ENCODE measurements at regions of chr6 and their contacts with region 1.

Region 1: GRCh38 chr6:105553171-105553570 is 150.3 kb upstream of the PREP start:
- DNase-seq: no peak
- H3K4me3 ChIP-seq: no peak overlapping the region
- H3K27ac ChIP-seq: no peak overlapping the region
- H3K4me1 ChIP-seq: no peaks in the 10 kb centered on the region
- H3K27me3 ChIP-seq: no peaks in the 10 kb centered on the region
- CTCF ChIP-seq: no peak
- POLR2A ChIP-seq: no peak

Region 2: DNA sequence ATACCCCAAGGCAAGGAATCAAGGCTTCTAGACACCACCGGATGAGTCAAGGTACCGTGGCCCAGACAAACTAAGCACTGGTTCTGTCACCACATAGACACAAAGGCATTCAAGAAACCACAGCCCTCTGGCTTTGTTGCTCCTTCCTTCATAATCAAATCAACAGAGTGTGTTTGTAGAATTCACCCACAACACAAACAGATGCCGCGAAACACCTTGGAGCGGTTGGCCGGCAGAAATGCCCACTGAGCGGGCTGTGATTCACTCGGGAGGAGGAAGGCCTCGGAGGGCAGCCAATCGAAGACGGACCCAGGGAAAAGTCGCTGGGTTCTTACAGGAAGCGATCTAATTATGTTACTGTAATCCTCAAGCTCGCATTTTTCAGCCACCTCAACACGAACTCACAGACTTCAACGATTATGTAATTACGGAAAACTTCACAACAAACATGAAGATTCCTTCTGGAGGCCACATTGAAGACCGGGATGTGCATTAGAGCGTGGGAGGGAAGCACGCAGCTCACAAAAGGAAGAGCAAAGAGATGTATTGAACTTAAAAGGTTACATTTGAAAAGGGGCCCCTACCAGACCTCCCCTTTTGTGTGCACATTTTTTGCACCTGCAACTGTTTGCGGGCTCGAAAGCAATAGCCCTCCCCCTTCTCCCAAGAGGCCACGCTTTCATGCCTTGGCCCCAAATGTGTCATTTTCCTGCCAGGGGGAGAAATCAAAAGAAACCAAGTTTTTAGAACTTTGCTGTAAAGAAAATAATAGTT is 34.4 kb after region 1 on chr6:
- intact Hi-C with region 1: loop called (anchors 2 kb)
- DNase-seq: no peak
- H3K4me3 ChIP-seq: no peak overlapping the region
- H3K27ac ChIP-seq: no peak overlapping the region
- H3K4me1 ChIP-seq: no peaks in the 10 kb centered on the region
- H3K27me3 ChIP-seq: no peaks in the 10 kb centered on the region
- CTCF ChIP-seq: no peak
- POLR2A ChIP-seq: no peak

Region 3: DNA sequence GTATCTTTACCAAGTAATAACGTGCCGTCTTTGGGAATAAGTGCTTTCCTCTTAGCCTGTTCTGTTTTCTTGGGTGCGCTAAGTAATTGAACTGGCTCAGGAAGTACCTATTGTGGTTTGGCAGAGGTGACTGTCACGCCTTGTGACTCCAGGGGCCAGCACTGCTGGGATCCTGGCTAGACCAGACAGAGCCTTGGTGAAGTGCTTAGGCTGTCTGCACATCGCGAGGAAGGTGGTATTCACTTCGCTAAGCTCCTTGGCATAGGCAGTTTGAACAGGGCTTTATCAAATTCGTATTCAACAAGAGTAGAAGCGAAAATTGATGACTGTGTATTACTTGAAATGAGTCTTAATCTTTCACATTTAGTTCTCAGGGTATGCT is 550.5 kb after region 1 on chr6:
- intact Hi-C with region 1: loop called (anchors 5 kb)
- DNase-seq: peak in 1 of 2 donors; percentile 68
- H3K4me3 ChIP-seq: peak overlapping the region in 2 of 3 donors; percentile 46 to 63
- H3K27ac ChIP-seq: peak overlapping the region; percentile 83 to 85
- H3K4me1 ChIP-seq: no peaks in the 10 kb centered on the region
- H3K27me3 ChIP-seq: no peaks in the 10 kb centered on the region
- CTCF ChIP-seq: no peak
- POLR2A ChIP-seq: no peak